PC-3 (cell line): ENCODE measurements at regions of chr2 and their contacts with region 1.

Region 1: GRCh38 chr2:226118471-226119430 is 680.9 kb downstream of the IRS1 start:
- DNase-seq: peak; percentile 92
- ATAC-seq: peak; percentile 53
- H3K4me3 ChIP-seq: peak overlapping the region; percentile 41
- H3K27ac ChIP-seq: peak overlapping the region; percentile 99
- H3K4me1 ChIP-seq: peaks cover 60% of the 10 kb centered on the region
- H3K27me3 ChIP-seq: no peaks in the 10 kb centered on the region
- CTCF ChIP-seq: no peak

Region 2: GRCh38 chr2:225598897-225599296 is 519.9 kb before region 1 on chr2:
- CTCF ChIA-PET with region 1: no interaction called
- POLR2A ChIA-PET with region 1: no interaction called
- intact Hi-C with region 1: no loop called
- DNase-seq: no peak
- ATAC-seq: no peak
- H3K4me3 ChIP-seq: no peak overlapping the region
- H3K27ac ChIP-seq: no peak overlapping the region
- H3K4me1 ChIP-seq: no peaks in the 10 kb centered on the region
- H3K27me3 ChIP-seq: 0 out of 2 replicates have a peak, but pooled peaks cover 11% of the 10 kb centered on the region
- CTCF ChIP-seq: no peak

Region 3: GRCh38 chr2:225889446-225889850 is 229.3 kb before region 1 on chr2:
- CTCF ChIA-PET with region 1: interaction called, 4 read pairs
- POLR2A ChIA-PET with region 1: interaction called, 5 read pairs
- intact Hi-C with region 1: loop called (anchors 1 kb)
- DNase-seq: peak; percentile 75
- ATAC-seq: peak; percentile 94
- H3K4me3 ChIP-seq: no peak overlapping the region
- H3K27ac ChIP-seq: peak overlapping the region; percentile 66
- H3K4me1 ChIP-seq: peaks cover 23% of the 10 kb centered on the region
- H3K27me3 ChIP-seq: no peaks in the 10 kb centered on the region
- CTCF ChIP-seq: peak; percentile 84

Region 4: GRCh38 chr2:226215902-226216503 is 97.3 kb after region 1 on chr2:
- CTCF ChIA-PET with region 1: no interaction called
- POLR2A ChIA-PET with region 1: no interaction called
- intact Hi-C with region 1: loop called (anchors 1 kb)
- DNase-seq: peak; percentile 69
- ATAC-seq: peak; percentile 63
- H3K4me3 ChIP-seq: no peak overlapping the region
- H3K27ac ChIP-seq: no peak overlapping the region
- H3K4me1 ChIP-seq: peaks cover 32% of the 10 kb centered on the region
- H3K27me3 ChIP-seq: no peaks in the 10 kb centered on the region
- CTCF ChIP-seq: peak; percentile 89

Region 5: GRCh38 chr2:226267516-226268289 is 149.0 kb after region 1 on chr2:
- CTCF ChIA-PET with region 1: no interaction called
- POLR2A ChIA-PET with region 1: no interaction called
- intact Hi-C with region 1: no loop called
- DNase-seq: no peak
- ATAC-seq: no peak
- H3K4me3 ChIP-seq: no peak overlapping the region
- H3K27ac ChIP-seq: no peak overlapping the region
- H3K4me1 ChIP-seq: 0 out of 2 replicates have a peak, but pooled peaks cover 7% of the 10 kb centered on the region
- H3K27me3 ChIP-seq: no peaks in the 10 kb centered on the region
- CTCF ChIP-seq: no peak

Region 6: DNA sequence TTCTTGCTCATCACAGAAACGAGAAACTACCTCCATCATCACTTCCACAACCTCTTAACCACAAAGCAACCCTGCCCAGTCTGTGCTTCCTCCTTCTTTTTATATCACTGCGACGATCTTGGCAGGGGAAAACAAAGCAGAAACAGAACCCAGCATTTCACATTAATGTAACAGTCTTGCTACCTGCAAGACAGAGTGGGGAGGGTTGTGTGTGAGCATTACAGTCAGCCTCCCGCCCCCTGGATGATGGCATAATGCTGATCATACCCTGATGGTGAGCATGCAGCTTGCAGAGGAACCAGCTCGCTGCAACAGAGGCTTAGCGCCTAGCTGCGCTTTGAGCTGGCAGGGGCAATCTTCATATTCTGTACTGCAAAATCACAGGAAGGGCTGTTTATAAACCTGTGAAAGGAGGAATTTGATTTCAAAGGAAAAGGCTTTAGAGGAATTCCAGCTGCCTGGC is 304.8 kb after region 1 on chr2:
- CTCF ChIA-PET with region 1: no interaction called
- POLR2A ChIA-PET with region 1: no interaction called
- intact Hi-C with region 1: loop called (anchors 5 kb)
- DNase-seq: peak; percentile 80
- ATAC-seq: peak; percentile 31
- H3K4me3 ChIP-seq: peak overlapping the region; percentile 33; the same call in 1 of the 2 replicates
- H3K27ac ChIP-seq: peak overlapping the region; percentile 95
- H3K4me1 ChIP-seq: peaks cover 56% of the 10 kb centered on the region
- H3K27me3 ChIP-seq: no peaks in the 10 kb centered on the region
- CTCF ChIP-seq: no peak

Region 7: GRCh38 chr2:226649871-226650660 is 531.3 kb after region 1 on chr2:
- CTCF ChIA-PET with region 1: no interaction called
- POLR2A ChIA-PET with region 1: no interaction called
- intact Hi-C with region 1: loop called (anchors 2 kb)
- DNase-seq: peak; percentile 98
- ATAC-seq: peak; percentile 91
- H3K4me3 ChIP-seq: no peak overlapping the region
- H3K27ac ChIP-seq: peak overlapping the region; percentile 97
- H3K4me1 ChIP-seq: peaks cover 43% of the 10 kb centered on the region
- H3K27me3 ChIP-seq: no peaks in the 10 kb centered on the region
- CTCF ChIP-seq: no peak

Region 8: GRCh38 chr2:226885769-226886435 is 767.2 kb after region 1 on chr2:
- CTCF ChIA-PET with region 1: no interaction called
- POLR2A ChIA-PET with region 1: no interaction called
- intact Hi-C with region 1: no loop called
- DNase-seq: no peak
- ATAC-seq: no peak
- H3K4me3 ChIP-seq: no peak overlapping the region
- H3K27ac ChIP-seq: no peak overlapping the region
- H3K4me1 ChIP-seq: no peaks in the 10 kb centered on the region
- H3K27me3 ChIP-seq: no peaks in the 10 kb centered on the region
- CTCF ChIP-seq: no peak